H1 (cell line): ENCODE measurements at regions of chr5 and their contacts with region 1.

Region 1: DNA sequence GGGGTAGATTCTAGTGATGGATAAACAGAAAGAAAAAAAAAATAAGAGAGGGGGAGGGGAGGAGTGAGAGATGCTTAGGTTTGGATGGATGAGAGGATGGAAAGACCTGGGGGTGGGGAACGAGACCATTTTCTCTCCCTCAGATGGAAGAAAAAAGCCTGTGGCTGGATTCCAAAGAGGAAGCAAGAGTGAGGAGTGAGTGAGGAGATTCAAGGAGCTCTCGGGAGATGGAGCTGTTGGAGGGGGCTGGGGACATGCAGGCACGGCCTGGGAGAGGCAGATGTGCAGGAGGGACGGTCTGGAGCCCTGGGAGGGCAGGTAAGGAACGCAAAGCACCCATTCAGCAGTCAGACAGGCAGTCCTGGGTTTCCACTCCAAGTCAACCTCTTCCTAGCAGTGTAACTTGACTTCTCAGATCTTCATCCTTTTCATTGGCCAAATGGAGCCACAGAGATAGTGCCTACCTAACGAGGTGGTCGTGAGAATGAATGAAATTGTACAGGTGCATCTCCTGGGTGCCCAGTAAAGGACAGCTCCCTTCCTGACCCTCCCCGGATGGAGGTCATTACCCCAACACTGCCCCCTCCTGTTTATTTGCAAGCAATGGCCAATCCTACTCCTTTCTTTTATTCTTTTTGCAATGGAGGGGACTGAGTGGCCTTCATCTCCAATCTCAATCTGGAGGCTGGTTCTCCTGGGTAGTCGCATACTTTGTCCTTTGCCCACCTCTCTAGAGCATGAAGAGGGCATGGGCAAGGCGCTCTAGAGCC is 52.2 kb downstream of the PCDH1 start:
- DNase-seq: no peak
- H3K4me3 ChIP-seq: no peak overlapping the region
- H3K27ac ChIP-seq: no peak overlapping the region
- H3K4me1 ChIP-seq: peaks cover 10 to 26% (median 16%) of the 10 kb centered on the region in 4 experiments
- H3K27me3 ChIP-seq: no peaks in the 10 kb centered on the region
- CTCF ChIP-seq: peak; percentile 56 to 70 (median 65)
- EP300 ChIP-seq: no peak
- POLR2A ChIP-seq: no peak
- RAD21 ChIP-seq: peak; percentile 64 to 74

Region 2: GRCh38 chr5:141623611-141624010 is 202.4 kb before region 1 on chr5:
- CTCF ChIA-PET with region 1: no interaction called
- POLR2A ChIA-PET with region 1: no interaction called
- DNase-seq: no peak
- H3K4me3 ChIP-seq: no peak overlapping the region
- H3K27ac ChIP-seq: no peak overlapping the region
- H3K4me1 ChIP-seq: peaks cover 0 to 4% (median 3%) of the 10 kb centered on the region in 4 experiments; a peak in 1 of 7 replicates
- H3K27me3 ChIP-seq: no peaks in the 10 kb centered on the region
- CTCF ChIP-seq: no peak
- EP300 ChIP-seq: no peak
- POLR2A ChIP-seq: no peak
- RAD21 ChIP-seq: no peak

Region 3: DNA sequence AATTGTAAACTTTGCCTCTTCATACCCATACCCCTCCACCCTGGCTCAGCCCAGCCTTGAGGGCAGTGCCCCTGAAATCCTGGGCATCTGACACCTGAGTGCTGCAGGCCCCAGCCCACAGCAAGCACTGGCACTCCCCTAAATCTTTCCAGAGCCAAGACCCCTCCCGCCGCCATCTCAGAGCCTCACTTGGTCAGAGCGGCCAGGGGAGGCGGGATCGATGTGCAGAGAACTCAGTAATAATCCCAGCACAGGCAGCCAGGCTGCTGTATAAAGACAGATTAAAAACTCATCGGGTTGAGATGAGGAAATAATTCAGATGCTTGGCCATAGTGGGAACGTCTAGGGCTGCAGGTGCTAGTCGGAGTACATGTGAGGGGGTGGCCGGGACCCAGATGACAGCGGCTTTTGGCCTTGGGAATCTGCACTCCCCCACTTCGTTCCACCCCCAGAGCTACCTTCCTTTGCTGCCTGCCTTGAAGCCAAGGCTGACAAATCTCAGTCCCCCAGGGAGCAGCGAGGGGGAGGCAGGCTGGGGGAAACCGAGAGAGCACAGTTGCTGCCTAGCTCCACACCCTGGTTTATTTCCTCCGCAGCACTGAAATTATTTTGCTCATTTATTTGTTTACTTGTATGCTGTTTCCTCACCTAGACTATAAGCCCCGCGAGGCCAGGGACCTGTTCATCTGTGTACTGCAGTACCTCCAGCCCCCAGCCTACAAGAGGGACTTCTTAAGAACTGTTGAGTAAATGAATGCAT is 124.4 kb before region 1 on chr5:
- CTCF ChIA-PET with region 1: interaction called, 21 read pairs
- POLR2A ChIA-PET with region 1: interaction called, 4 read pairs
- DNase-seq: no peak
- H3K4me3 ChIP-seq: peak overlapping the region in 1 of 4 experiments; percentile 73; a peak in 1 of 8 replicates
- H3K27ac ChIP-seq: no peak overlapping the region
- H3K4me1 ChIP-seq: peaks cover 5 to 9% (median 5%) of the 10 kb centered on the region in 4 experiments
- H3K27me3 ChIP-seq: peaks cover 0 to 36% (median 30%) of the 10 kb centered on the region in 4 experiments; a peak in 6 of 7 replicates
- CTCF ChIP-seq: no peak
- EP300 ChIP-seq: no peak
- POLR2A ChIP-seq: no peak
- RAD21 ChIP-seq: no peak

Region 4: GRCh38 chr5:141757402-141757801 is 68.6 kb before region 1 on chr5:
- CTCF ChIA-PET with region 1: interaction called, 179 read pairs
- POLR2A ChIA-PET with region 1: interaction called, 3 read pairs
- DNase-seq: peak in 1 of 2 experiments; percentile 29
- H3K4me3 ChIP-seq: no peak overlapping the region
- H3K27ac ChIP-seq: no peak overlapping the region
- H3K4me1 ChIP-seq: peaks cover 17 to 30% (median 26%) of the 10 kb centered on the region in 4 experiments
- H3K27me3 ChIP-seq: peaks cover 9 to 22% (median 18%) of the 10 kb centered on the region in 4 experiments
- CTCF ChIP-seq: peak in 2 of 3 experiments; percentile 78 to 79; a peak in 3 of 4 replicates
- EP300 ChIP-seq: no peak
- POLR2A ChIP-seq: no peak
- RAD21 ChIP-seq: peak; percentile 76 to 86

Region 5: DNA sequence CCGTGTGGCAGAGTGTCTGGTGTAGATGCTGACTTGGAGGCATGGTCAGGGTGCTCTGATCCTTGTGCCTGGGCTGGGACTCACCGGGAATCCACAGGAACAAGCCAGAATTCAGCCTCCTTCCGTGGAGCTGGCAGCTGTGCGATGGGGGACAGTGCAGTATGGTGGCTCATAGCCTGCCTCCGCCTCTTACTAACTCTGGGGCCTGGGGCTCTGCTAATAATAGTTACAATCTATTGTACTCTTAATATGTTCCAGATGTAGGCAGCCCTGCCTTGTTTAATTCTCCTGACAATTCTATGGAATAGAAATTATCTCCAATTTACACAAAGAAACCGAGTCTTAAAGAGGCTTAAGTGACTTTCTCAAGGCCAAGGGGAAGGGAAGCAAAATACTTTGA is 25.4 kb before region 1 on chr5:
- CTCF ChIA-PET with region 1: interaction called, 15 read pairs
- POLR2A ChIA-PET with region 1: interaction called, 4 read pairs
- DNase-seq: no peak
- H3K4me3 ChIP-seq: no peak overlapping the region
- H3K27ac ChIP-seq: no peak overlapping the region
- H3K4me1 ChIP-seq: peaks cover 4 to 19% (median 8%) of the 10 kb centered on the region in 4 experiments
- H3K27me3 ChIP-seq: no peaks in the 10 kb centered on the region
- CTCF ChIP-seq: no peak
- EP300 ChIP-seq: no peak
- POLR2A ChIP-seq: no peak
- RAD21 ChIP-seq: no peak

Region 6: DNA sequence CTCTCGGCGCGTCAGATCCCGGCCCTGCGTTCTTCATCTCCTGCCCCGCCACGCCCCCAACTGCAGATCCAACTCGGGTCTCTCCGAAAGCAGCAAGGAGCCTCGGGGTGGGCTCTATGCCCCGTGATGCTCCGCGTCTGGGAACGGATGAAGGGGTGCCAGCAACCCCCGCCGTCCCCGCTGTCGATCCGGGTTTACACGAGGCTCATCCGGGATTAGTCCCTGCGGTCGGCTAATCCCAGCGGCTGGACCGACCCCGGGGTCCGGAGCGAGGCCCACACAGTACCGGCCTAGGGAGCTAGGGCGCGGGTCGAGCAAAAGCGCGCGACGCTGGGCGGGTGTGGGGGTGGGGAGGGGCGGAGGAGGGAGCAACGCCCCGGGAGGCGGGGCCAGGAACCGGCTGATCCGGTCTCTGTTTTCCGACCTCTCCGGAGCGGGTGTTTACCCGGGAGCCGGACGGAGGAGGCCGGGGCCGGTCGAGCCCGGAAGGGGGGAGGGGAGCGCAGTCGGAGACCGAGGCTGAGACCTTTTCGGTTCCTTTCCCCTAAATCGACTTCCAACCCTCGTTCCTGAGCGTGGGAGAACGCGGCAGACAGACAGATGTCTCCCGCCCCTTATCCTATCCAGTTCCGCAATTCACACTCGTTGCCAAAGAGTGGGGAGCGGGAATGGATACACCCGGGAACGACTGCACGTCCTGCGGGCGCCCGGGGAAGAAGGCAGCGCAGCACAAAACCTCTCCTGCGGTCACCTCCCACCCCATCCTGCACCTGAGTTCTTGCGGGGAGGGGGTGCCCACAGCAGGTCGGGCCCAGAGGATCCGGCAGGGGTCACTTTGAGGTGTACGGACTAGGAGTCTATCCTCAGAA is 23.6 kb after region 1 on chr5:
- CTCF ChIA-PET with region 1: interaction called, 37 read pairs
- POLR2A ChIA-PET with region 1: interaction called, 5 read pairs
- DNase-seq: peak; percentile 58 to 93
- H3K4me3 ChIP-seq: peak overlapping the region; percentile 47 to 78 (median 70)
- H3K27ac ChIP-seq: peak overlapping the region; percentile 99
- H3K4me1 ChIP-seq: peaks cover 27 to 57% (median 46%) of the 10 kb centered on the region in 4 experiments
- H3K27me3 ChIP-seq: no peaks in the 10 kb centered on the region
- CTCF ChIP-seq: no peak
- EP300 ChIP-seq: peak in 1 of 2 experiments; percentile 82; a peak in 1 of 3 replicates
- POLR2A ChIP-seq: peak in 1 of 2 experiments; percentile 74; a peak in 2 of 3 replicates
- RAD21 ChIP-seq: no peak; a peak in 1 of 4 replicates